ENCODE measurements at regions of chr15 and their contacts with region 1.

Region 1: GRCh38 chr15:58980351-58980939 is 7.0 kb upstream of the RNF111 start:
- DNase-seq: no peak
- ATAC-seq: no peak
- H3K4me3 ChIP-seq: no peak overlapping the region
- H3K27ac ChIP-seq: no peak overlapping the region
- H3K4me1 ChIP-seq: peaks cover 0 to 43% (median 5%) of the 10 kb centered on the region in 9 donors
- H3K27me3 ChIP-seq: no peaks in the 10 kb centered on the region
- CTCF ChIP-seq: peak; percentile 28 to 73 (median 65)

Region 2: GRCh38 chr15:59124261-59124660 is 143.8 kb after region 1 on chr15:
- intact Hi-C with region 1: no loop called
- DNase-seq: no peak
- ATAC-seq: no peak
- H3K4me3 ChIP-seq: no peak overlapping the region
- H3K27ac ChIP-seq: no peak overlapping the region
- H3K4me1 ChIP-seq: peaks cover 0 to 7% (median 0%) of the 10 kb centered on the region in 9 donors
- H3K27me3 ChIP-seq: no peaks in the 10 kb centered on the region
- CTCF ChIP-seq: no peak

Region 3: DNA sequence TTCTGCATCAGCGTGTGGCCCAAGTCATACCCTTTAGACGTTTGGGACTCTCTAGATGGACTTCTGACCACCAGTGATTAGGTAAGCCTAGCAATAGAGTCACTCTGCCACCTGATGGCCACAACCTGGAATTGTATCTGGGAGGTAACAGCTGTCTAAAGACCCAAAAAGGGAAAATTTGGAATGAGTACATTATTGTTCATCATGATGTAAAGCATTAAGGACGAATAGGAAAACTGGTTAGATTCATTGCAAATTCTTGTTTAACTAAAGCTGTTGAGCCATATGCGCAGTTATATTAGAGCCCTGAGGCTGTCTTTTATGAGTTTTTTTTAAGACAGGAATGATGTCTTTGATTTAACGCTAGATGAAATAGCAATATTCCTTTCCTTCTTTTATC is 521.2 kb after region 1 on chr15:
- intact Hi-C with region 1: loop called in 4 of 10 experiments (anchors 1 to 10 kb)
- DNase-seq: no peak
- ATAC-seq: no peak
- H3K4me3 ChIP-seq: no peak overlapping the region
- H3K27ac ChIP-seq: no peak overlapping the region
- H3K4me1 ChIP-seq: no peaks in the 10 kb centered on the region
- H3K27me3 ChIP-seq: peaks cover 0 to 4% (median 0%) of the 10 kb centered on the region in 7 donors
- CTCF ChIP-seq: peak; percentile 4 to 66 (median 59)

Measured in heart right ventricle (tissue), 16 donors.